Sigmoid colon (tissue), 7 donors: ENCODE measurements at regions of chr2 and their contacts with region 1.

Region 1: DNA sequence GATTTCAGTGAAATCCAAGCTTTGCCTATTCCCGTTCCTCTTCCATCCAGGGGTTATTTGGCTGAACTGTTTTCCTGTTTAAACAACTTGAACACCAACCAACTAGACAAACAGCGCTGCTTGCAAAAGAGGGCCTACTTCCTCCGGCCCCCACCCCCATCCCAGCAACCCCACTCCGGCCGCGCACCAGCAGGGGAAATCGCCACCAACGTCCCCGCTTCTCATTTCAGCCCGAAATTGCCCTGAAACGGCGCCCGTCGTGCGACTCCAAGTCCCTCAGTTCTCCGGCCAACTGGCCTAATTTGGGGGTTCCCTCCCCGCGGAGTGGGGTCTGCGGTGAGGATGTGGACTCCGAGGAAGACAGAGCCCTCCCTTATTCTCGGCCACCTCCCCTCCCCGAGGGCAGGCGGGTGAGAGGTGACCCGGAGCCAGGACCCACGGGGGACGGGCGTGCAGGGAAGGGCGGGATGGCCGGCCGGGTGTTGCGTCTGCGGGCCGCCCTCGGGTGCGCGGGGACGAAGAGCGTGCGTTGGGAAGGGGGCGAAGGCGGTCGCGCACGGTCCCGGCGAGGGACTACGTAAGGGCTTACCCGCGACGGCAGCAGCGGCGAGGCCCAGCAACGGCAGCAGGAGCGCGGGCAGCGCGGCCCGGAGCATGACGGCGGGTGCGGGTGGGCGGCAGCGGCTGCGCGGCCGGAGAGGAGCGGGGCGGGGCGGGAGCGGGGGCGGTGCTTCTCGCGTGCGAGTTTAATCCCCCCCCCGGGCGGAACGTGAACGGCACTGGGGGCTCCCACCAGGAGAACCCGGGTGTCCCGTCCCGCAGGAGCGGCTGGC is at the start of gene CD302:
- DNase-seq: peak; percentile 84
- H3K4me3 ChIP-seq: peak within 1 kb of the TSS; percentile 68 to 93 (median 76)
- H3K27ac ChIP-seq: peak within 1 kb of the TSS; percentile 72 to 81 (median 78)
- H3K4me1 ChIP-seq: peaks cover 0 to 20% (median 9%) of the 10 kb centered on the region in 4 donors
- H3K27me3 ChIP-seq: no peaks in the 10 kb centered on the region
- CTCF ChIP-seq: peak in 1 of 4 experiments; percentile 9
- EP300 ChIP-seq: no peak
- POLR2A ChIP-seq: no peak
- total RNA-seq, gene CD302: 42.4 to 67.6 (median 53.6) TPM

Region 2: GRCh38 chr2:159484532-159484931 is 313.2 kb before region 1 on chr2:
- intact Hi-C with region 1: no loop called
- DNase-seq: no peak
- H3K4me3 ChIP-seq: no peak overlapping the region
- H3K27ac ChIP-seq: no peak overlapping the region
- H3K4me1 ChIP-seq: peaks cover 0 to 18% (median 4%) of the 10 kb centered on the region in 4 donors
- H3K27me3 ChIP-seq: no peaks in the 10 kb centered on the region
- CTCF ChIP-seq: no peak
- EP300 ChIP-seq: no peak
- POLR2A ChIP-seq: no peak

Region 3: DNA sequence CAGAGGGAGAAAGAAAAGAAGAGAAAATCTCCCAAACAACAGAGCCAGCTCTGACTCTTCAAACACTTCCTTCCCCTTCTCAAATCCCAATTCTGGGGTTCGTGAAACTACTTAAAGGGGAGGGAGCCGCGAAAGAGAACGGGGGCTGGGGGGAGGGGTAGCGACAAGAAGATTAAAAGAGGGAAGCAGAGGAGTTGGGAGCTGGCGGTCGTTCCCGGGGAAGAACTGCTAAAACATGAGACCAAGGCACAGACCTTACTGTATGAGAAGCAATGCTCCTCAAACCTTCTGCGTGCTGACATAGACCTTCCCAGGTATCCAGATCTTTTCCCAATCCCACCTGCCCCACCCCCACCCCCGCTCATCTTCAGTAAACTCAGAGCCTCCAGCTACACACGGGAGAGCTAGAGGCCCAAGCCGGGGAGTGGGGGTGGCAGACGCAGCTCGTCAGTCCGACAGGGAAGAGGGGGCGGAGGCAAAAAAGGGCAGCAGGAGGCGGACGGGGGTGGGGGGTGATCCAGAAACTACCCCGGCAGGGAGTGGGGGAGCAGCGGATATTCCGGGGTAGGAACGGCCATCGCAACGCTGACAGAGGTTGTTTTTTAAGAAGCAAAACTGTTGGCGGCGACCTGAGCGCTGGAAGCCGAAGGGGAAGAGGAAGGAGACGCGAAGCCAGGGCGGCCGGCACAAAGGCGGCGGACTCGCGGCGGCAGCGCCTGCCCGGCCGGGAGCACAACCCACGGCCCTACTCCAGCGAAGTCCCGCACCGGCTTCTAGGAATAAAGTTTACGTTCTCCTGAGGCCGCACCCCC is 182.4 kb before region 1 on chr2:
- intact Hi-C with region 1: loop called (anchors 5 kb)
- DNase-seq: peak; percentile 97
- H3K4me3 ChIP-seq: peak overlapping the region; percentile 75 to 94 (median 85)
- H3K27ac ChIP-seq: peak overlapping the region; percentile 95 to 99 (median 98)
- H3K4me1 ChIP-seq: peaks cover 0 to 48% (median 32%) of the 10 kb centered on the region in 4 donors
- H3K27me3 ChIP-seq: no peaks in the 10 kb centered on the region
- CTCF ChIP-seq: no peak
- EP300 ChIP-seq: no peak
- POLR2A ChIP-seq: peak; percentile 88 to 89

Region 4: GRCh38 chr2:159755788-159756187 is 42.0 kb before region 1 on chr2:
- intact Hi-C with region 1: no loop called
- DNase-seq: no peak
- H3K4me3 ChIP-seq: no peak overlapping the region
- H3K27ac ChIP-seq: no peak overlapping the region
- H3K4me1 ChIP-seq: peaks cover 0 to 30% (median 8%) of the 10 kb centered on the region in 4 donors
- H3K27me3 ChIP-seq: no peaks in the 10 kb centered on the region
- CTCF ChIP-seq: no peak
- EP300 ChIP-seq: no peak
- POLR2A ChIP-seq: no peak

Region 5: DNA sequence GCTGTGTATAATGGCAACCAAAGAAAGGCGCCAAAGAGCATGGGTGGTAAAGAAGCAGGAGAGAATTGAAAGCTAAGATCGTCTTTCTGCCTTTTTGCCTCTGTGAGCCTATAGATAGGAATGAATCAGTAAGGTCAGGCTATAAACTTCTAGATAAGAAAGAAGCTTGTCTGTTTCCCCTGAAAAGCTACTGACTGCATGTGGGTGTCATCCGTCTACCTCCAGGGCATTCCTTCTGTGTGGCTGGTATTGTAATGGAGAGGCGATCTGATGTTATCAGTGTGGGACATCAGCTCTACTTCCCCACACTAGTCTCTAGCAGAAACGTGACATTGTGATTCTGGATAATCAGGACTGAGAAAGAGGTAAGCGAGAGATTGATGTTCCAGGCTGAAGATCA is 328.1 kb after region 1 on chr2:
- intact Hi-C with region 1: no loop called
- DNase-seq: no peak
- H3K4me3 ChIP-seq: no peak overlapping the region
- H3K27ac ChIP-seq: no peak overlapping the region
- H3K4me1 ChIP-seq: no peaks in the 10 kb centered on the region
- H3K27me3 ChIP-seq: no peaks in the 10 kb centered on the region
- CTCF ChIP-seq: no peak
- EP300 ChIP-seq: no peak
- POLR2A ChIP-seq: no peak